ENCODE measurements at regions of chr6 and their contacts with region 1.

Region 1: GRCh38 chr6:159008656-159009288 is 8.8 kb upstream of the RSPH3 start:
- DNase-seq: no peak
- ATAC-seq: peak; percentile 84
- H3K4me3 Mint-ChIP-seq: peak overlapping the region; percentile 62
- H3K27ac Mint-ChIP-seq: peak overlapping the region; percentile 82
- H3K4me1 Mint-ChIP-seq: peaks cover 36% of the 10 kb centered on the region
- H3K27me3 Mint-ChIP-seq: no peaks in the 10 kb centered on the region

Region 2: GRCh38 chr6:158207422-158207788 is 801.4 kb before region 1 on chr6:
- CTCF ChIA-PET with region 1: no interaction called
- DNase-seq: peak; percentile 73
- ATAC-seq: peak; percentile 94
- H3K4me3 Mint-ChIP-seq: peak overlapping the region; percentile 56
- H3K27ac Mint-ChIP-seq: peak overlapping the region; percentile 91
- H3K4me1 Mint-ChIP-seq: peaks cover 52% of the 10 kb centered on the region
- H3K27me3 Mint-ChIP-seq: no peaks in the 10 kb centered on the region

Region 3: GRCh38 chr6:158926416-158926815 is 82.4 kb before region 1 on chr6:
- CTCF ChIA-PET with region 1: no interaction called
- DNase-seq: no peak
- ATAC-seq: no peak
- H3K4me3 Mint-ChIP-seq: no peak overlapping the region
- H3K27ac Mint-ChIP-seq: no peak overlapping the region
- H3K4me1 Mint-ChIP-seq: no peaks in the 10 kb centered on the region
- H3K27me3 Mint-ChIP-seq: no peaks in the 10 kb centered on the region

Region 4: DNA sequence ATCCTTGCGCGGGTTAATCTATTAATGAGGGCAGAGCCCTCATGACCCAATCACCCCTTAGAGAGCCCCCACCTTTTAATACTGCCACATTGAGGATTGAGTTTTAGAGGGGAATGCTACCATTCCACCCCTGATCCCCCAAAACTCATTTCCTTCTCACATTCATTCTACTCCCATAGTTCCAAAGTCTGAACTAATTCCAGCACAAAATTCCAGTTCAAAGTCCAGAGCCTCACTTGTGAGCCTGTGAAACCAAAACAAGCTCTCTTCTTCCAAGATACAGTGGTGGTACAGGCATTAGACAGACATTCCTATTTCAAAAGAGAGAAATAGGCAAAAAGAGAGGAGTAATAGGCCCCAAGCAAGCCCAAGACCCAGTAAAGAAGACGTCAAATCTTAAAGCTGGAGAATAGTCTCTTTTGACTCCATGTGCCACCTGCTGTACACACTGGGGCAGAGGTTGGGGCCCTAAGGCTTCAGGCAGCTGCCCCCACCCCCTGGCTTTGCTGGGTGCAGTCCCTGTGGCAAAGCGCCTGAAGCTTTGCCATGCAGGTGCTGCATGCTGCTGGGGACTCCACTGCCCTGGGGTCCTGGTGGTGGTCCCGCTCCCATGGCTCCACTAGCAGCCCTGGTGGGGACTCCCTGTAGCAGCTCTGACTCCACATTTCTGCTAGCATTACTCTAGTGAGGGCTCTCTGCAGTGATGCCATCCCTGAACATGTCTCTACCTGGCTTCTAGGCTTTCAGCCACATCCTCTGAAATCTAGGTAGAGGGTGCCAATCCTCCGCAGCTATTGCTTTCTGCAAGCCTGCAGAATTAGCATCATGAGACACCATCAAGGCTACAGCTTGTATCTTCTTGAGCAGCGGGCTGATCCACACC is 50.0 kb before region 1 on chr6:
- CTCF ChIA-PET with region 1: no interaction called
- DNase-seq: no peak
- ATAC-seq: no peak
- H3K4me3 Mint-ChIP-seq: no peak overlapping the region
- H3K27ac Mint-ChIP-seq: no peak overlapping the region
- H3K4me1 Mint-ChIP-seq: no peaks in the 10 kb centered on the region
- H3K27me3 Mint-ChIP-seq: peaks cover 4% of the 10 kb centered on the region

Region 5: DNA sequence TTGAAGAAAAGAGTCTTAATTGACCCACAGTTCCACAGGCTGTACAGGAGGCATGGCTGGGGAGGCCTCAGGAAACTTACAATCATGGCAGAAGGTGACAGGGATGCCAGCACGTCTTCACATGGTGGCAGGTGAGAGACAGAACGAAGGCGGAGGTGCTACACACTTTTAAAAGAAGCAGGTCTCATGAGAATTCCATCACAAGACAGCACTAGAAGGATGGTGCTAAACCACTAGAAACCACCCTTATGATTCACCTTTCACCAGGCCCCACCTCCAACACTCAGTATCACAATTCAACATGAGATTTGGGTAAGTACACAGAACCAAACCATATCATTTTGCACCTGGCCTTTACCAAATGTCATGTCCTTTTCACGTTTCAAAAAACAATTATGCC is 15.1 kb after region 1 on chr6:
- CTCF ChIA-PET with region 1: interaction called, 30 read pairs
- DNase-seq: no peak
- ATAC-seq: peak; percentile 51
- H3K4me3 Mint-ChIP-seq: no peak overlapping the region
- H3K27ac Mint-ChIP-seq: no peak overlapping the region
- H3K4me1 Mint-ChIP-seq: peaks cover 11% of the 10 kb centered on the region
- H3K27me3 Mint-ChIP-seq: no peaks in the 10 kb centered on the region

Region 6: GRCh38 chr6:159062564-159062945 is 53.8 kb after region 1 on chr6:
- CTCF ChIA-PET with region 1: interaction called, 12 read pairs
- DNase-seq: peak; percentile 88
- ATAC-seq: peak; percentile 86
- H3K4me3 Mint-ChIP-seq: peak overlapping the region; percentile 55
- H3K27ac Mint-ChIP-seq: peak overlapping the region; percentile 99
- H3K4me1 Mint-ChIP-seq: peaks cover 92% of the 10 kb centered on the region
- H3K27me3 Mint-ChIP-seq: peaks cover 2% of the 10 kb centered on the region

Region 7: GRCh38 chr6:159116343-159116742 is 107.6 kb after region 1 on chr6:
- CTCF ChIA-PET with region 1: interaction called, 320 read pairs
- DNase-seq: no peak
- ATAC-seq: no peak
- H3K4me3 Mint-ChIP-seq: no peak overlapping the region
- H3K27ac Mint-ChIP-seq: no peak overlapping the region
- H3K4me1 Mint-ChIP-seq: peaks cover 7% of the 10 kb centered on the region
- H3K27me3 Mint-ChIP-seq: peaks cover 3% of the 10 kb centered on the region